Activated T-helper 2 cell treated with anti-CD3 and anti-CD28 coated beads, Interferon-gamma antibody, Interleukin-2, Interleukin-4, amounts not matched to agents 10 μg/mL and 5 μg/mL and 100 μg/mL, durations not matched to agents 14 hours and 24 hours and 36 hours (primary cell): ENCODE measurements at regions of chr17 and their contacts with region 1.

Region 1: GRCh38 chr17:50956750-50957523 is 90.8 kb upstream of the TOB1 start:
- DNase-seq: peak; percentile 53
- H3K4me3 Mint-ChIP-seq: no peak overlapping the region
- H3K27ac Mint-ChIP-seq: no peak overlapping the region
- H3K4me1 Mint-ChIP-seq: peaks cover 2% of the 10 kb centered on the region
- H3K27me3 Mint-ChIP-seq: no peaks in the 10 kb centered on the region

Region 2: GRCh38 chr17:50783193-50783660 is 173.7 kb before region 1 on chr17:
- intact Hi-C with region 1: loop called (anchors 2 kb)
- DNase-seq: peak; percentile 75
- H3K4me3 Mint-ChIP-seq: no peak overlapping the region
- H3K27ac Mint-ChIP-seq: no peak overlapping the region
- H3K4me1 Mint-ChIP-seq: peaks cover 19% of the 10 kb centered on the region
- H3K27me3 Mint-ChIP-seq: peaks cover 58% of the 10 kb centered on the region

Region 3: DNA sequence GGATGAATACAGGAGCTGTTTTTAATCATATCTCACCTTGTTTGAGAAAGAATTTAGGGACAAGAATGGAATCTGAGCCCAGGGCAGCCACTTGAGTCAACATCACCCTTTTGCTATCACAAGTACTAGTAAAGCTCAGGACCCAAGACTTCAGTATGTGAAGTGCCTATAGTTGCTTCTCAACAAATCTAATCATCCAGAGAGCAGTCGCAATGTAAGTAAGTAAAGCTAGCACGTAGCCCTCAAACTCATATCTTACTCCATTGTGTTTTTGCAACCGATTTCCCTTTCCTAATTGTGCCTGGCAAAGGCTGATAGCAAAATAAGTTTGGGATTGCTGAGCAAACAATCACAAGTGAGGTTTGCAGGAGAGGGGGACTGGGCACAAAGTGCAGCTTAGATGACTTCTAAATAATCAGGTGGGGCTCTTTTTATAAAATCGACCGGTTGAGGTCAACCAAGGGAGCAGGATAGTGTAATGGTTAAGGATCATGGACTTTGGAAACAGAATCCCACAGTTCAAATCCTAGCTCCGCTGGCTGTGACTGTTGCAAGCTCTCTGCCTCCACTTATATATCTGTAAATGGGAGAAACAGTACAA is 103.8 kb before region 1 on chr17:
- intact Hi-C with region 1: loop called (anchors 1 kb)
- DNase-seq: no peak
- H3K4me3 Mint-ChIP-seq: no peak overlapping the region
- H3K27ac Mint-ChIP-seq: no peak overlapping the region
- H3K4me1 Mint-ChIP-seq: peaks cover 16% of the 10 kb centered on the region
- H3K27me3 Mint-ChIP-seq: peaks cover 34% of the 10 kb centered on the region

Region 4: GRCh38 chr17:50918933-50919296 is 38.0 kb before region 1 on chr17:
- intact Hi-C with region 1: no loop called
- DNase-seq: no peak
- H3K4me3 Mint-ChIP-seq: no peak overlapping the region
- H3K27ac Mint-ChIP-seq: peak overlapping the region; percentile 84
- H3K4me1 Mint-ChIP-seq: peaks cover 31% of the 10 kb centered on the region
- H3K27me3 Mint-ChIP-seq: no peaks in the 10 kb centered on the region

Region 5: GRCh38 chr17:50944054-50944901 is 12.7 kb before region 1 on chr17:
- intact Hi-C with region 1: no loop called
- DNase-seq: peak; percentile 72
- H3K4me3 Mint-ChIP-seq: peak overlapping the region; percentile 63
- H3K27ac Mint-ChIP-seq: peak overlapping the region; percentile 64
- H3K4me1 Mint-ChIP-seq: peaks cover 12% of the 10 kb centered on the region
- H3K27me3 Mint-ChIP-seq: no peaks in the 10 kb centered on the region